Sigmoid colon (tissue), 7 donors: ENCODE measurements at regions of chr4 and their contacts with region 1.

Region 1: GRCh38 chr4:94406668-94407437 is 44.9 kb upstream of the PDLIM5 start:
- DNase-seq: peak; percentile 89
- H3K4me3 ChIP-seq: no peak overlapping the region
- H3K27ac ChIP-seq: peak overlapping the region; percentile 57 to 81 (median 70)
- H3K4me1 ChIP-seq: peaks cover 0 to 40% (median 26%) of the 10 kb centered on the region in 4 donors
- H3K27me3 ChIP-seq: no peaks in the 10 kb centered on the region
- CTCF ChIP-seq: peak; percentile 38 to 86 (median 55)
- EP300 ChIP-seq: no peak
- POLR2A ChIP-seq: no peak

Region 2: DNA sequence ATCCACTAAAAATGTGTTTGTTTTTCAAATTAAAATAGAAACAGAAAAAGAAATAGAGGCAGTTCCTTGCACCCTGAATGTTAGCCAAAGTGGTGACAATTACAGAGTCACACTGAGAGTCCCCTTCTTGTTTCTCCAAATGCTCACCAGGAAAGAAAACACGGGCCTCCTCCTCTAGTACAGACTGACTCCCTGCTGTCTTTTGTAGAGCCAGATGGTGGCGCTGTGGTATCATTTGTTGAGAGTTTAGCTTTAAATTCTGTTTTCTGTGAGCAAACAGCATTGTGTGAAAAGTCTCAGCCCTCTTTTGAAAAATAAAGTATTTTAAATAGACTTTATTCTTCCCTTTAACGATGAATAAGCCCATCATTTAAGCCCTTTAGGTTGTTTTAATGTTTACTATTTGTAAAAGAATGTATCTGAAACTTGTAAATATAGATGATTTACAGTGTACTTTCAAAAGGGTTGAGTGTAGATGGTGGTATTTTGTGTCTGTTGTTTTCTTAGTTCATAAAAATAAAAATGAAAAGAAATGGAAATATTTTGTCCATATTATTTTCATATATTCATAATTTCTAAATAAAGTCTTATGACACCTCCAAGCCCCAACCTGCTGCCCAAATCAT is 615.2 kb before region 1 on chr4:
- intact Hi-C with region 1: loop called (anchors 10 kb)
- DNase-seq: no peak
- H3K4me3 ChIP-seq: no peak overlapping the region
- H3K27ac ChIP-seq: no peak overlapping the region
- H3K4me1 ChIP-seq: no peaks in the 10 kb centered on the region
- H3K27me3 ChIP-seq: peaks cover 0 to 6% (median 0%) of the 10 kb centered on the region in 3 donors
- CTCF ChIP-seq: peak; percentile 15 to 71 (median 50)
- EP300 ChIP-seq: no peak
- POLR2A ChIP-seq: no peak

Region 3: GRCh38 chr4:94290245-94290644 is 116.6 kb before region 1 on chr4:
- intact Hi-C with region 1: no loop called
- DNase-seq: no peak
- H3K4me3 ChIP-seq: no peak overlapping the region
- H3K27ac ChIP-seq: no peak overlapping the region
- H3K4me1 ChIP-seq: no peaks in the 10 kb centered on the region
- H3K27me3 ChIP-seq: no peaks in the 10 kb centered on the region
- CTCF ChIP-seq: peak in 1 of 4 experiments; percentile 4
- EP300 ChIP-seq: no peak
- POLR2A ChIP-seq: no peak

Region 4: GRCh38 chr4:94444771-94445170 is 37.9 kb after region 1 on chr4:
- intact Hi-C with region 1: no loop called
- DNase-seq: no peak
- H3K4me3 ChIP-seq: no peak overlapping the region
- H3K27ac ChIP-seq: no peak overlapping the region
- H3K4me1 ChIP-seq: no peaks in the 10 kb centered on the region
- H3K27me3 ChIP-seq: no peaks in the 10 kb centered on the region
- CTCF ChIP-seq: no peak
- EP300 ChIP-seq: no peak
- POLR2A ChIP-seq: no peak

Region 5: DNA sequence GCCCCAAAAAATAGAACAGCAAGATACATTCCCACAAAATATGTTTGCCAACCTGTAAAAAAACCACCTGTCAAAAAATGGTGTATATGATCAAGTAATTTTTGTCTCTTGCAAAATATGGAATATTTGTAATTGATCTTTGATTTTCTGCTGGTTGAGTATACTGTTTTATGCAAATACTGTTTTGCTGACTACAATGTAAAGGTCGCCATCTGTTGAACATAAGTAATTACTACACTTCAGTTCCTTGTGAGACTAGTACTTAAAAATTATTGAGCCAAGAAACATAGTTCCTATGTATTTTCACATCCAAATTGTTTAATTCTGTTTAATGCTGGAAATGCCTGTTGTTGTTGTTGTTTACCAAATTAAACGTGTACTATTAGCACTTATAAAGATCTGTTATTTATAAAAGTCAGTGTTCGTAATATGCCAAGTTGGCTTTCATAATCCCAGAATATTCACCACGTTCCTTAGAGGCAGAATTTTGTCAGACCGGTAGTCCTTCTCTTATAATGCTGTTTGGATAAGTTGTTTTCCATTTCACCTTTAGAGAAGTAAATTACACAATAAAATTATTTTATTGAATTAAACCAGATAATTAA is 189.1 kb after region 1 on chr4:
- intact Hi-C with region 1: loop called (anchors 1 kb)
- DNase-seq: no peak
- H3K4me3 ChIP-seq: no peak overlapping the region
- H3K27ac ChIP-seq: no peak overlapping the region
- H3K4me1 ChIP-seq: peaks cover 0 to 6% (median 0%) of the 10 kb centered on the region in 4 donors
- H3K27me3 ChIP-seq: no peaks in the 10 kb centered on the region
- CTCF ChIP-seq: peak; percentile 38 to 68 (median 52)
- EP300 ChIP-seq: no peak
- POLR2A ChIP-seq: no peak

Region 6: GRCh38 chr4:94732358-94732698 is 325.5 kb after region 1 on chr4:
- intact Hi-C with region 1: loop called (anchors 10 kb)
- DNase-seq: no peak
- H3K4me3 ChIP-seq: no peak overlapping the region
- H3K27ac ChIP-seq: no peak overlapping the region
- H3K4me1 ChIP-seq: no peaks in the 10 kb centered on the region
- H3K27me3 ChIP-seq: no peaks in the 10 kb centered on the region
- CTCF ChIP-seq: no peak
- EP300 ChIP-seq: no peak
- POLR2A ChIP-seq: no peak